ENCODE measurements at regions of chr18 and their contacts with region 1.

Region 1: GRCh38 chr18:26307189-26307773 is 81.0 kb downstream of the TAF4B start:
- DNase-seq: peak; percentile 75
- ATAC-seq: peak; percentile 75
- H3K4me3 ChIP-seq: no peak overlapping the region
- H3K27ac ChIP-seq: no peak overlapping the region
- H3K4me1 ChIP-seq: peaks cover 4% of the 10 kb centered on the region; the same call in 1 of the 2 replicates
- H3K27me3 ChIP-seq: no peaks in the 10 kb centered on the region
- CTCF ChIP-seq: peak; percentile 71

Region 2: DNA sequence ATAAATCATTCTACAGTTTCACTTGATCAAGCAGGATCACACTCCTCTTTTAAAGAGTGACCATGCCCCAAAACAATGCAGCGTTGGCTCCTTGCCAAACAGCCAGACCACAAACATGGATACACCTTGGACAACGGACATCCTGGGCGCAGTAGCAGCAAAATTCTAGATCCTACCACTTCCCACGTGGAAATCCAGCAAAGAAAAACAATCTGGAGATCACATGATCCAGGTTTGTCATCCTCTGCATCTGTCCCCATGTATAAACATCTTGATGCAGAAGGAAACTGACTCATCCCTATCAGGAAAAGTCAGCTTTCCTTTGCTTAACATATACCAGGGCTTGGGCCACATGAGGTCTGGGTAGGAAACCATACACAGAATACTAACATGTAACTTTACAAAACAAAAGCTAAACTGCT is 1008.4 kb before region 1 on chr18:
- CTCF ChIA-PET with region 1: no interaction called
- POLR2A ChIA-PET with region 1: no interaction called
- intact Hi-C with region 1: no loop called
- DNase-seq: peak; percentile 89
- ATAC-seq: peak; percentile 96
- H3K4me3 ChIP-seq: no peak overlapping the region
- H3K27ac ChIP-seq: peak overlapping the region; percentile 31
- H3K4me1 ChIP-seq: peaks cover 18% of the 10 kb centered on the region
- H3K27me3 ChIP-seq: no peaks in the 10 kb centered on the region
- CTCF ChIP-seq: no peak

Region 3: DNA sequence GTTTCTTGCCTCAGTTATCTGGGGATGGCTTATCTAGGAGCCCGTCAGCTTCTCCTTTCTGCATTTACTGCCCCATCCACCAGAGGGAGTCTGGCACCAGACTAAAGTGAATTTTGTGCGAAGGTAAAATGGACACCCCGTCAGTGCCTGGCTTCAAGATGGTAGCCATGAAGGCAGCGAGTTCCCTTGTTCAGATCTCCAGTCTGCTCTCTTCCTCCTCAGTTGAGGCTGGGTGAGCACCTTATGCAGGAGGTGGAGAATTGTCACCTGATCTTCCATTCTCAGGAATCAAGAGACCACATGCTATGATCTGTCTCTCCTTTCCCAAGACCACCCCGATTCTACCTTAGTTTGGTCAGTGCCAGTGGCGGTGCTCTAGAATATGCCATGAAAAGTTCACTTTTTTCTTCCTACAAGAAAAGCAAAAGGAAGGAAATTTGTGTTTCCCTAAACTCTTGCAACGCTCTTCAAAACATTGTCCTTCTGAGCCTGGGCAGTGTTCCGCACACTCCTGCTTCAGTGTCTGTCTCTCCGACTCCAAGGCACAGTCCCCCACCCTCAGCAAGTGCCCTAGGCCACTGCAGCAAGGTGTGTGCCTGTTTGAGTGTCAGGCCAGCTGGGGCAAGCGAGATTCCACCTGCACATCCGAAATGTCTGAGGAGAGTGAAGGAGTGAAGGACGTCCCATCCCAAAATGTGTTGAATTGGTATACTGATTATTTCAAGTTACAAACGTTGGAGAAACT is 385.4 kb before region 1 on chr18:
- CTCF ChIA-PET with region 1: no interaction called
- POLR2A ChIA-PET with region 1: no interaction called
- intact Hi-C with region 1: loop called (anchors 5 kb)
- DNase-seq: peak; percentile 60
- ATAC-seq: peak; percentile 65
- H3K4me3 ChIP-seq: no peak overlapping the region
- H3K27ac ChIP-seq: no peak overlapping the region
- H3K4me1 ChIP-seq: no peaks in the 10 kb centered on the region
- H3K27me3 ChIP-seq: peaks cover 49% of the 10 kb centered on the region
- CTCF ChIP-seq: peak; percentile 75

Region 4: GRCh38 chr18:26383454-26384270 is 76.4 kb after region 1 on chr18:
- CTCF ChIA-PET with region 1: interaction called, 7 read pairs
- POLR2A ChIA-PET with region 1: no interaction called
- intact Hi-C with region 1: loop called (anchors 5 kb)
- DNase-seq: peak; percentile 64
- ATAC-seq: peak; percentile 80
- H3K4me3 ChIP-seq: no peak overlapping the region
- H3K27ac ChIP-seq: no peak overlapping the region
- H3K4me1 ChIP-seq: peaks cover 17% of the 10 kb centered on the region
- H3K27me3 ChIP-seq: no peaks in the 10 kb centered on the region
- CTCF ChIP-seq: peak; percentile 81

Region 5: GRCh38 chr18:26480897-26481895 is 173.9 kb after region 1 on chr18:
- CTCF ChIA-PET with region 1: no interaction called
- POLR2A ChIA-PET with region 1: no interaction called
- intact Hi-C with region 1: loop called (anchors 5 kb)
- DNase-seq: peak; percentile 98
- ATAC-seq: peak; percentile 83
- H3K4me3 ChIP-seq: peak overlapping the region; percentile 48
- H3K27ac ChIP-seq: peak overlapping the region; percentile 97
- H3K4me1 ChIP-seq: peaks cover 73% of the 10 kb centered on the region
- H3K27me3 ChIP-seq: no peaks in the 10 kb centered on the region
- CTCF ChIP-seq: no peak

Region 6: DNA sequence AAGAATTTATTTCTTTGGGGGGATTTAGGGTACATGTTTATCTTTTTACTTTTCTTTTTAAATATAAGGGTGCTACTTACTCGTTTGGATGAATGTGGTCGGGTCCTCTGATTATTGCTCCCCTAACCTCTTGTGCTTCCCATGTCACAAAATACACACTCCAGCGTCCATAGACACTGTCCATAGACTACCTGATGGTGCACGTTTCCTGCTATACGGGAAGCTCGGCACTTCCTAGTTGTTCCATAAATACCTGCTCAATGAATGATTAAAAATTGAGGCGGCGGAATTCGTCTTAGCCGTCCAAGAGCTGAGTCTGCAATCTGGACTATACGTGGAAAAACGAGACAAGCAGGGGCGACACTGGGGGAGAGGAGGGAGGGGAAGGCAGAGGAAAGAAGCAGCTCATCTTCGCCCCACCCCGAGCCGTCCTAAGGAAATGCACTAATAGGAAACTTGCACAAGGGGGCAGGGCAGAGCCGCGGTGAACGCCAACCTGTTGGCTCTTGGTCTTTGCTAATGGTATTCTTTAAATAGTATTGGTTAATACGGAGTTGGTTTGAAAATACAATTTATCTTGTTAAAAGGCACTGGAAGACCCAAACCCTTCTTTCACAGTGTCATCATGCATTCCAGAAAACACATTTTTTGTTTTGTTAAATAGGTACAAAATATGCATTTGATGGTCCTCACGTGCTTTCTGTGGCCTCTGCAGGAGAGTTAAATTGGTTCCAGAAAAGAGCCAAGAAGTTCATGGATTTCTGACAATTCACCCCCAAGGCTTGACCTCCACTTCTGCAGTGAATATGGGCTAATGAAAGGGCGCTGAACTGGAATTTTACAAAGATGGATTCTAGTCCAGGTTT is 314.1 kb after region 1 on chr18:
- CTCF ChIA-PET with region 1: no interaction called
- POLR2A ChIA-PET with region 1: no interaction called
- intact Hi-C with region 1: loop called (anchors 5 kb)
- DNase-seq: peak; percentile 79
- ATAC-seq: peak; percentile 83
- H3K4me3 ChIP-seq: peak overlapping the region; percentile 67
- H3K27ac ChIP-seq: no peak overlapping the region
- H3K4me1 ChIP-seq: peaks cover 19% of the 10 kb centered on the region
- H3K27me3 ChIP-seq: no peaks in the 10 kb centered on the region
- CTCF ChIP-seq: peak; percentile 83

Region 7: DNA sequence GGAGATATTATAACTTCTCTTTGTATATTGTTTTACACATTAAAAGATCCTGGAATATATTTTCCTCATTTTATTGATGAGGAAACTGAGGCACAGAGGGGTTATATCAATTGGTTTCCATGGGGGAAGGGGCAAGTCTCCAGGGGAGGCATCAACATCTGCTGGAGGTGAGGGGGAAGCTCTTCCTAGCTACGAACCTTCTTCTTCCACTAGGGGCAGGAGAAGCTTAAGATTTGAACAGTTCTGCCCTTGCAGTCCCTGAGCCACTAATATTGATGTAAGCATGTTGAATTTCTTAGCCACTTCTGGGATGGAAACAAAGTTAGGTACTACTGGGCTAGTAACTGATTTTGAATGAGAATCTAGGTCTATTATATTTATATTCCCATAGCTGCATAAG is 698.3 kb after region 1 on chr18:
- CTCF ChIA-PET with region 1: no interaction called
- POLR2A ChIA-PET with region 1: no interaction called
- intact Hi-C with region 1: loop called (anchors 10 kb)
- DNase-seq: peak; percentile 44
- ATAC-seq: peak; percentile 69
- H3K4me3 ChIP-seq: no peak overlapping the region
- H3K27ac ChIP-seq: no peak overlapping the region
- H3K4me1 ChIP-seq: no peaks in the 10 kb centered on the region
- H3K27me3 ChIP-seq: peaks cover 36% of the 10 kb centered on the region
- CTCF ChIP-seq: peak; percentile 62

Measured in PC-3 (cell line).